ENCODE measurements at regions of chr1 and their contacts with region 1.

Region 1: DNA sequence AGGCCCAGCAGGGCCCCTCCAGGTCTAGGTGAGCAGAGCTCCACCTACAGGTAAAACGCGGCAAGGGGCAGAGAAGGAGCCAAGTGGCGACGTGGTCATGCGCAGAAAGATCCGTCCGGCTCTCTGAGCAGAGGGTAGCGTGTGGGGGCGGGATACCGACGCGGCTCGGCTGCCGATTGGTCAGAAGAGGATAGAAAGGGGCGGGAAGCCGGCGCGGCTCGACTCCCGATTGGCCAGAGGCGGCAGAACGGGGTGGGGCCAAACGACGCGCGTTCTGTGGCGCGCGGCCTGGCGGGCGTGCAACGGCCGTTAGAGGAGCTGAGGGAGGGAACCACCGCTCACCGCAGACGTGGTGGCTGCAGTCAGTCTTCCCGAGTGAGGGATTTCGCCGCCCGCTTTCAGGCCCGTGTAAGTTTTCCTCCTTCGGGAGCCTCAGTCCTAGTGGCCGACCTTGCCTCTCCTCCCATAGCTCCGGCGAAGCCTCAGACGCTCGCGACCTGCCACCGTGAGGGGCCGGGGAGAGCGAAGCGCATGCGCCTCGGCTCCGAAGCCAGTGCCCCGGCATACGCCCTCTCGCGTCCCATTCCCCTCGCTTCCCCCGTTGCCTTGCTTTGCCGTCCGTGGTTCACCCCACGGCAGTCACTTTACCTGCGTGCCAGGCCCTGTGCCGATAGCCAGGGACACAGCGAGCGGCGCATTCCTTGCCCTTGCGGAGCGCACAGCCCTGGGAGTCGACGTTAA is at the start of gene CEP85:
- DNase-seq: peak; percentile 99
- H3K4me3 Mint-ChIP-seq: peak within 1 kb of the TSS; percentile 96
- H3K27ac Mint-ChIP-seq: peak within 1 kb of the TSS; percentile 86
- H3K4me1 Mint-ChIP-seq: peaks cover 36% of the 10 kb centered on the region
- H3K27me3 Mint-ChIP-seq: no peaks in the 10 kb centered on the region
- total RNA-seq, gene CEP85: 30.3 to 32.6 TPM

Region 2: GRCh38 chr1:25430666-25431505 is 803.2 kb before region 1 on chr1 and contains the start of gene MACO1:
- CTCF ChIA-PET with region 1: no interaction called
- POLR2A ChIA-PET with region 1: no interaction called
- intact Hi-C with region 1: loop called (anchors 5 kb)
- DNase-seq: peak; percentile 98
- H3K4me3 Mint-ChIP-seq: peak within 1 kb of the TSS; percentile 98
- H3K27ac Mint-ChIP-seq: peak within 1 kb of the TSS; percentile 98
- H3K4me1 Mint-ChIP-seq: peaks cover 44% of the 10 kb centered on the region
- H3K27me3 Mint-ChIP-seq: no peaks in the 10 kb centered on the region
- total RNA-seq, gene MACO1: 11.0 to 11.4 TPM

Region 3: DNA sequence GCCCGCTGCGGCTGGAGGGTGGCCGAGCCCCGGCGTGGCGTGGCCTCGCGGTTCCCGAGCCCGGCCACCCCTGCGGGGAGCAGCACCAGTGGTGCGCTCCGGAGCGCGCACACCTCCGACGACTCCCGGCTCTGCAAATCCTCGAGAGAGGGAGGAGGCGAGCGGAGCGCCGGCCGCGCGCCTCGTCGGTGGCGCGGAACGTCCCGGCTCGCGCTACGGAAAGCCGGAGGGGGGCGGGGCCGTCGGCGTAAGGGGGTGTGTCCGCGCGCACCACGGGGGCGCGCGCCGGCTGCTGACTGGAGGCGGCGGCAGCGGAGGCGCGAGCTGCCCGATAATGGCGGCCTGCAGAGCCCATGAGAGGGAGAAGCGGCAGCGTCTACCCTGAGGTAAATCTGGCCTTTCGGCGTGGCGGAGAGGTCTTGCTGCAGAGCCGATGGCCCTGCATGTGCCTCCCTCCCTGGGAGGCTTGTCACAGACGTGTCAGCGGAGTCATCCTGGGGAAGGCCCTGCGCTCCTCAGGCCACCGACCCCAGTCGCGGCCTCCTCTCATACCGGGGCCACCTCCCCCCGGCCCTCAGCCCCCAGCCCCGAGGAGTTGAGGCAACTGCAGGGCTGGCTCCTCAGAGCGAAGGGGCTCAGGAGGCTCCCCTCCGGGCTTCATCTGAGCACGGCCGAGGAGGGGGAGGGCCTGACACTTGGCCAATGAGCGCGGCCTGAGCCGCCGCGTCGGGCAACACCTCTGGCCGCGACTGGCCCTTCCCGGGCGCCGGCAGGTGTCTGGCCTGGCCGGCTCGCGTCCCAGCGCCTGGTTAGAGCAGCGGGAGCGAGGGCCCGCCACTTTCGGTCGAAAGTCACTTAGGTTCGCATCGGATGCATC is 122.3 kb before region 1 on chr1 and contains the start of gene PDIK1L:
- CTCF ChIA-PET with region 1: interaction called, 8 read pairs
- POLR2A ChIA-PET with region 1: interaction called, 3 read pairs
- intact Hi-C with region 1: loop called (anchors 2 kb)
- DNase-seq: peak; percentile 96
- H3K4me3 Mint-ChIP-seq: peak within 1 kb of the TSS; percentile 97
- H3K27ac Mint-ChIP-seq: peak within 1 kb of the TSS; percentile 93
- H3K4me1 Mint-ChIP-seq: peaks cover 28% of the 10 kb centered on the region
- H3K27me3 Mint-ChIP-seq: no peaks in the 10 kb centered on the region
- total RNA-seq, gene PDIK1L: 14.9 to 15.2 TPM

Region 4: GRCh38 chr1:26169669-26170471 is 64.2 kb before region 1 on chr1 and contains the start of gene ZNF593:
- CTCF ChIA-PET with region 1: interaction called, 80 read pairs
- POLR2A ChIA-PET with region 1: interaction called, 19 read pairs
- intact Hi-C with region 1: loop called (anchors 1 kb)
- DNase-seq: peak; percentile 94
- H3K4me3 Mint-ChIP-seq: peak within 1 kb of the TSS; percentile 83
- H3K27ac Mint-ChIP-seq: peak within 1 kb of the TSS; percentile 72
- H3K4me1 Mint-ChIP-seq: peaks cover 17% of the 10 kb centered on the region
- H3K27me3 Mint-ChIP-seq: no peaks in the 10 kb centered on the region
- total RNA-seq, gene ZNF593: 37.4 to 38.0 TPM

Region 5: GRCh38 chr1:26279456-26280332 is 45.6 kb after region 1 on chr1 and contains the start of gene SH3BGRL3:
- CTCF ChIA-PET with region 1: interaction called, 31 read pairs
- POLR2A ChIA-PET with region 1: interaction called, 3 read pairs
- intact Hi-C with region 1: loop called (anchors 2 kb)
- DNase-seq: peak; percentile 89
- H3K4me3 Mint-ChIP-seq: peak within 1 kb of the TSS; percentile 89
- H3K27ac Mint-ChIP-seq: peak within 1 kb of the TSS; percentile 94
- H3K4me1 Mint-ChIP-seq: peaks cover 87% of the 10 kb centered on the region
- H3K27me3 Mint-ChIP-seq: no peaks in the 10 kb centered on the region
- total RNA-seq, gene SH3BGRL3: 305 to 320 TPM

Region 6: GRCh38 chr1:26300586-26301275 is 66.7 kb after region 1 on chr1:
- CTCF ChIA-PET with region 1: no interaction called
- POLR2A ChIA-PET with region 1: no interaction called
- intact Hi-C with region 1: no loop called
- DNase-seq: no peak
- H3K4me3 Mint-ChIP-seq: no peak overlapping the region
- H3K27ac Mint-ChIP-seq: no peak overlapping the region
- H3K4me1 Mint-ChIP-seq: peaks cover 13% of the 10 kb centered on the region
- H3K27me3 Mint-ChIP-seq: no peaks in the 10 kb centered on the region

Region 7: DNA sequence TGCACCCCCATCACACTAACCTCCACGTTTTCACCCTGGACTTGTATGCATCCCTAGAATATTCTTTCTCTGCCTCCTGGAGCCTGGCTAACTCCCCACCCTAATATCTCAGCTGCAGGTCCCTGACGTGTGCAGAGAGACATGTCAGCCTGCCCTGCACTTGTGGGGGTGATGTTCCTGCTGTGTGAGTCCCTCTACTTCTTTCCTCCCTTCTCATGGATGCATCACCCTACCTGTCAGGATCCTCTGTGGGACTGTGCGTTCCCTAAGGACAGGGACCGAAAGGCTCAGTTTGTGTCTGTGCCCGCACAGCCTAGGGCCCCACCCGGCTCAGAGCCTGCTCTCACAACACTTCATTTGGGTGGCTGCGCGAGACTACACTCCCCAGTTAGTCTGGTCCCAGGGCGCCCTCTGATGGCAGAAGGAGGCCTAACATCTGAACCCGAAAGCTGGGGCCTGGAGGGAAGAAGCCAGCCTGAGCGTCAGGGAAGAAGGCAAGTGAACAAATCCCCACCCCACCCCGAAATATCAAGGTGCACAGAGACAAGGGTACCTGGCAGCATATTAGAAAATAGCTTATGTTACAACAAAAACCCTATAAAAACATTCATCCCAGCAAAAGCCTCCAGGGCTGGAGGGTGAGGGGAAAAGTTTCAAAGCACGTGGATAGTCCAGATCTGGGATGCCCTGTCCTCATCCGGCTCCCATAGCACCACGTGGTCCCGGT is 87.4 kb after region 1 on chr1:
- CTCF ChIA-PET with region 1: interaction called, 34 read pairs
- POLR2A ChIA-PET with region 1: interaction called, 5 read pairs
- intact Hi-C with region 1: loop called (anchors 2 kb)
- DNase-seq: peak; percentile 97
- H3K4me3 Mint-ChIP-seq: peak overlapping the region; percentile 77
- H3K27ac Mint-ChIP-seq: peak overlapping the region; percentile 91
- H3K4me1 Mint-ChIP-seq: peaks cover 34% of the 10 kb centered on the region
- H3K27me3 Mint-ChIP-seq: no peaks in the 10 kb centered on the region

Region 8: DNA sequence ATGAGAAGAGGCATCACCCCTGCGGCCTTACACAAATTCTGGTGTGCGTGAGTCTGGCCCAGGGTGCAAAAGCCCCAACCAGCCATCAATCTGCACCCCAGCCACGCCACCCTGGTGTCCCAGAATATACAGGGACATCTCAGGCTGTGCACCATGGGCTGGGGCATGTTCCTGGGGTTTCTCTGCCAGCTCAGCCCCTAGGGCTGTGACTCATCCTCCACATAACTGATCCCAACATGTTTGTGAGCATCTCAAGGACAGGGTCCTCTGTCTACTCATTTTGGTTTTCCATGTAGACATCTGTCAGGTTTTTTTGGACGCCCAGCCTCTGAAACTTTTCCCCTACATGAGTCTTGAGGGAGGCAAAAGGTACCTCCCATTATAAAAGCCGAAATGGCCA is 138.0 kb after region 1 on chr1:
- CTCF ChIA-PET with region 1: interaction called, 10 read pairs
- POLR2A ChIA-PET with region 1: no interaction called
- intact Hi-C with region 1: no loop called
- DNase-seq: no peak
- H3K4me3 Mint-ChIP-seq: no peak overlapping the region
- H3K27ac Mint-ChIP-seq: no peak overlapping the region
- H3K4me1 Mint-ChIP-seq: peaks cover 72% of the 10 kb centered on the region
- H3K27me3 Mint-ChIP-seq: no peaks in the 10 kb centered on the region

Region 9: GRCh38 chr1:26541816-26542711 is 308.0 kb after region 1 on chr1:
- CTCF ChIA-PET with region 1: no interaction called
- POLR2A ChIA-PET with region 1: no interaction called
- intact Hi-C with region 1: no loop called
- DNase-seq: peak; percentile 94
- H3K4me3 Mint-ChIP-seq: peak overlapping the region; percentile 69
- H3K27ac Mint-ChIP-seq: peak overlapping the region; percentile 98
- H3K4me1 Mint-ChIP-seq: peaks cover 88% of the 10 kb centered on the region
- H3K27me3 Mint-ChIP-seq: no peaks in the 10 kb centered on the region

Measured in activated CD4-positive, alpha-beta memory T cell treated with anti-CD3 and anti-CD28 coated beads for 36 hours (primary cell).